BJ (cell line): ENCODE measurements at regions of chr22 and their contacts with region 1.

Region 1: DNA sequence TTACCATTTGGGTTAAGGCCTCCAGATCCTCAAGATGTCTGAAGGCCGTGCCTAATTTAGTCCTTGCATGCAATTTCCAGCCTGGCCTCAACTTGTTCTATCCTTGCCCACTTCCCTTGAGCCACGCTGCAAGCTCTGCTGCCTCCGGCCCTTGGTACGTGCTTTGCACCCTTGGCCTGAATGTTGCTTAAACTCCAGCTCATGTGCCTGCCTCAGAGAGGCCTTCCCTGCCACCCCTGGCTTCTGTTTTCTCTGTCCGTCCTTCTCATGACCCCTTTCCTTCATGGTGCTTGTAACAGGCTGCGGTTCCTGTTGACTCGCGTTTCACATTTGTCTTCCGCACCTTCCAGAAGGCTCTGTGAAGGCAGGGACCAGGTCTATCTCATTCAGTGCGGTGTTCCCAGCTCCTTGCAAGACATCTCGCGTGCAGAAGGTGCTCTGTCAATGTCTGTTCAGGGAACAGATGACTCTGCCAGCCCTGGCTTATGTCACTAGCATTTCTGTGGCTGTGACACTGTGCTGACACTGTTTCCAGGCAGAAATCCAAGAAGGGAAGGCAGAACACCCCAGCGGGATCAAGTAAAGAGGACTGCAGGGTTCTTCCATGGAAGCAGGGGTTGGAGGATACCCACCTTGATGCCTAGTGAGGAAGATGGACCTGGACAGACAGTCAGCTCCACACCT is 61.8 kb downstream of the FBLN1 start:
- DNase-seq: no peak
- H3K4me3 ChIP-seq: no peak overlapping the region
- H3K27me3 ChIP-seq: no peaks in the 10 kb centered on the region
- CTCF ChIP-seq: no peak

Region 2: GRCh38 chr22:45450921-45451651 is 113.4 kb before region 1 on chr22:
- CTCF ChIA-PET with region 1: no interaction called
- POLR2A ChIA-PET with region 1: interaction called, 11 read pairs
- DNase-seq: peak; percentile 99
- H3K4me3 ChIP-seq: no peak overlapping the region
- H3K27me3 ChIP-seq: no peaks in the 10 kb centered on the region
- CTCF ChIP-seq: no peak

Region 3: DNA sequence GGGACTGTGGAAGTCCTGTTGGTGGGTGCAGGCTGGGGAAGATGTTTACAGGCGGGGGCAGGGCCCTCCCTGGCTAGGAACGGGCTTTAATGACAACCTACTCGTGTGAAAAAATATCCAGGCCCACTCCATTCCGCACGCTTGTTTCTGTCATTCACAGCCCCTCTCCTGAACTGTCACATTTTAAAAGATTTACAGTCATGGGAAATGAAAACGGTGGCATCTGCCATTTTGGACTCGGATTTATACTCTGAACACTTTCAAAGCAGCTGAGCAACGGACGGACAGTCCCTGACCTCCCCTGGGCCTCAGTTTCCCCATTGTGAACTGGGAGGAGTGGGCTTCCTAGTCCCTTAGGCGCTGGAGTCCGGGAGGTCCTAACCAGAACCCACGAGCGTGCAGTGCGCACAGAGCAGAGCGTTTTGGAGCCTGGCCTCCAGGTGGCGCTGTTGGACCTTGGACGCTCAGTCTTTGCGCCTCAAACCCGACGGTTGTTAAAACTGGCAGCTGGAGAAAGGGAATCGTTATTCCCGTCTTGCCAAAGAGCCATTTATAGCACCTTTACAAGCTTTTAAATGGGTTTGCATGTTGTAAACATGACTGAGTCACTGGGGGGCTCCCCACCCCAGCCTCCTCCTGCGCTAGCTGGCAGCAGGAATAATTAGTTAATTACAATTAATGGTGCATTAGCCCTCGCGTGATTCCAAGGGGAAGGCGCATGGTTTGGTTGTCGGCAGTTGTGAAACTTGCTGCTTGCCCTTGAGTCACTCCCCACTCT is 13.4 kb after region 1 on chr22:
- CTCF ChIA-PET with region 1: interaction called, 25 read pairs
- POLR2A ChIA-PET with region 1: no interaction called
- DNase-seq: no peak
- H3K4me3 ChIP-seq: no peak overlapping the region
- H3K27me3 ChIP-seq: no peaks in the 10 kb centered on the region
- CTCF ChIP-seq: peak; percentile 93